ENCODE measurements at regions of chr16 and their contacts with region 1.

Region 1: DNA sequence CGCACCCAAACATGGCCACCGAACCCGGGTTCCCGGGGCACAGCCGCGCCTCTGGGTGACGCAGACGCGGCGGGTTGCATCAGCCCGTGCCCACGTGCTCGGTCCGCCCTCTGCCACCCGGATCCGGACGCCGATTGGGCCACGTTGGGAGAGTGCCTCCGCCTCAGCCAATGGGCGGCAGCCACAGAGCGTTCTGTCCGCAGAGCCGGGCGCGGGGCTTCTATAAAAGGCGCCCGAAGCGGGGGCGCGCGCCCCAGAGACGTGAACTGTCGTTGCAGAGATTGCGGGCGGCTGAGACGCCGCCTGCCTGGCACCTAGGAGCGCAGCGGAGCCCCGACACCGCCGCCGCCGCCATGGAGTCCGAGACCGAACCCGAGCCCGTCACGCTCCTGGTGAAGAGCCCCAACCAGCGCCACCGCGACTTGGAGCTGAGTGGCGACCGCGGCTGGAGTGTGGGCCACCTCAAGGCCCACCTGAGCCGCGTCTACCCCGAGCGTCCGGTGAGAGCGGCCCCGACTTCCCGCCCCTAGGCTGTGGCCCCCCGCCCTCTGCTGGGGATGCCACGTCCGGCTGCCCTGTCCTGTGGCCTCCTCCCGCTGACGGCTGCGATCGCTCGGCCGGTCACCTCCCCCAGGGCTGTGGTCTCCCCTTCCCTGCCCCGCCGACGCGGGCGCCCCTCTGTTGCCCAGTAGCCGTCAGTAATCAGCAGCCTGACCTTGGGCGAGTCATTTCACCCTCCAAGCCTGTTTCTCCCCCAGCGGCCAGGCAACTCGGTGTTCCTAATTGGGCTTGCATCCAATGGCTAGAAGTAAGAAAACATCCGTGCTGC is at the start of gene HERPUD1:
- DNase-seq: peak; percentile 89
- ATAC-seq: peak; percentile 84
- H3K4me3 ChIP-seq: peak within 1 kb of the TSS; percentile 92
- H3K27ac ChIP-seq: peak within 1 kb of the TSS; percentile 88
- H3K4me1 ChIP-seq: peaks cover 20% of the 10 kb centered on the region
- H3K27me3 ChIP-seq: no peaks in the 10 kb centered on the region
- CTCF ChIP-seq: no peak
- EP300 ChIP-seq: no peak
- POLR2A ChIP-seq: peak; percentile 99
- RAD21 ChIP-seq: no peak
- polyA plus RNA-seq, gene HERPUD1: 32.6 to 68.1 TPM

Region 2: DNA sequence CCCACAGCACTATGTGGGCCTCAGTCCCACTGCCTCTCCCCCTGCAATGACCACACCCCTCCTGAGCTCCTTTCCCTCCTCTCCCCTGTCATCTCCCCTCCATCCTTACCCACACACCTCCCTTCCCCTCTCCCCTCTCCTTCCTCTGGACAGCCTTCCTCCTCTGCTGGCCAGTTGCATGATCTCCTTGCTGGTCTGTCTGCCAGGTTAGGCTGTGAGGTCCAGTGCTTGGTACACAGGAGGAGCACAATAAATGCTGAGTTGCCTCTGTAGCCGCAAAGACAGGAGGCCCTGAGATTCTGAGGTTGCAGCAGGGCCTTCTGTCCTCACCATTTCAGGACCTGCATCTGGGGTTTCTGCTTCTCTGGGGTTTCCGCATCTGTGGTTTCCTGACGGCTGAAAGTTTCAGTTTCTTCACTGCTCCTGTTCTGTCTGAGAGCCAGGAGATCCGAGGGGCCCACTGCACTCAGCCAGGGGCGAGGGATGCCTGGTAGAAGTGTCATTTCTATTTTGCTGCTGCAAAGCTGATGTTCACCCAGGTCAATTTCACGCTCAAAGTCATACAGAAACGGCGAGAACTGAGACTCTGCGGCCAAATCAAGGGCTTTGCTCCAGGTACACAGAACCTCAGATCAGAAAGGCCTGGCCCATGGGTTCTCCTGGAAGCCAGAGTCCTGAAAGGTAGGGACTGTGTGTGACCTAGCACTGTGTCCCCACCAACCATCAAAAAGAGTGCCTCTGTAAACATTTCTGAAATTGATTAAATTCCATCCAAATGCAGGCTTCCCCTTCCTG is 71.7 kb before region 1 on chr16:
- CTCF ChIA-PET with region 1: interaction called, 5 read pairs
- POLR2A ChIA-PET with region 1: interaction called, 7 read pairs
- RAD21 ChIA-PET with region 1: interaction called, 3 read pairs
- SMC1A ChIA-PET with region 1: interaction called, 6 read pairs
- in situ Hi-C with region 1: no loop called
- intact Hi-C with region 1: loop called (anchors 1 kb)
- DNase-seq: peak; percentile 75
- ATAC-seq: peak; percentile 93
- H3K4me3 ChIP-seq: 0 out of 2 replicates have a peak overlapping the region, but pooled peaks have one; percentile 13
- H3K27ac ChIP-seq: peak overlapping the region; percentile 52
- H3K4me1 ChIP-seq: peaks cover 33% of the 10 kb centered on the region
- H3K27me3 ChIP-seq: no peaks in the 10 kb centered on the region
- CTCF ChIP-seq: no peak
- EP300 ChIP-seq: no peak
- POLR2A ChIP-seq: no peak
- RAD21 ChIP-seq: no peak; the same call in 1 of the 2 replicates

Region 3: DNA sequence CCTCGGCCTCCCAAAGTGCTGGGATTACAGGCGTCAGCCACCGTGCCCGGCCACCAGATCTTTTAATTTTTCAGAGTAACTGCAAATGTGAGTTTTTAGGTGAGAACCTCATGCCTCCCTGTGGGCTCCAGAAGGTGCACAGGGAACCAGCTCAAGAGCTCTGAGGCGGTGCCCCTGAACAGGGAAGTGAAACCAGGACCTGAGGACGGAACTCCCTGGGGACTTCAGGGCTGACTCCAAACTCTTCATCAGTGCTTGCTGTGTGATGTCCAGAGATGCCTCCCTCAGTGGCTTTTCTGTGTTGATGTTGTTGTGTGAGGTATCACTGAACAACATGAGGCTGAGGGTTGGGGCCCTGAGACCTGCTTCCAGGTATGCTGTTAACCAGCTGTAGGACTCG is 43.3 kb before region 1 on chr16:
- CTCF ChIA-PET with region 1: interaction called, 3 read pairs
- POLR2A ChIA-PET with region 1: interaction called, 8 read pairs
- RAD21 ChIA-PET with region 1: interaction called, 10 read pairs
- SMC1A ChIA-PET with region 1: interaction called, 9 read pairs
- in situ Hi-C with region 1: no loop called
- intact Hi-C with region 1: loop called (anchors 2 kb)
- DNase-seq: peak; percentile 61
- ATAC-seq: peak; percentile 94
- H3K4me3 ChIP-seq: no peak overlapping the region
- H3K27ac ChIP-seq: no peak overlapping the region
- H3K4me1 ChIP-seq: peaks cover 8% of the 10 kb centered on the region
- H3K27me3 ChIP-seq: no peaks in the 10 kb centered on the region
- CTCF ChIP-seq: peak in 2 of 3 experiments; percentile 15 to 27; a peak in 2 of 6 replicates
- EP300 ChIP-seq: peak in 1 of 2 experiments; percentile 57; a peak in 1 of 4 replicates
- POLR2A ChIP-seq: no peak
- RAD21 ChIP-seq: 0 out of 2 replicates have a peak, but pooled peaks have one; percentile 37

Region 4: DNA sequence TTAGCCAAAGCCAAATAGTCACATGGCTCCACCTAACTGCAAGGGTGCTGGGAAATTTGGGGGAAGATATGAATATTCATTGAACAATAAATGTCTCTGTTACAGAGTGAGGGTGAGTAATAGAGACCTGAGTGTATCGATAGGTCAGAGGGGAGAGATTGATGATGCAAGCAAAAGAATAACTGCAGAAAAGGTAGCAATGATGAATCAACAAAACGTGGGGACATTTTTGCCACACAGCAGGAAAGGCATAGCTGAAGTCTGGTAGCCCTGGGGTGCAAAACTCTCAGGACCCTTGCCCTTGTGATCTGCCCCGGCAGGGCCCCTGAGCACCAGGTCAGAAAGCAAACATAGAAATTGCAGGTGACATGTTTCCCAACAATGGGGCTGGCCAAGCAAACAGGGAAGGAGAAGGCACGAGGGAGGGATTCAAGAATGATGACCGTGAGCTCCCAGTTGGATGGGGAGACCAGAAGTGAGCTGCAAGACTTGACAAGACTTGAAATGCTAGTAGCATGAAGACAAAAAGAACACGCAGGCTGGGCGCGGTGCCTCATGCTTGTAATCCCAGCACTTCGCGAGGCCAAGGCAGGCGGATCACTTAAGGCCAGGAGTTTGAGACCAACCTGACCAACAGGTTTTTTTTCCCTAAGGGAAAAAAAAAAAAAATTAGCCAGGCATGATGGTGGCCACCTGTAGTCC is 12.9 kb before region 1 on chr16:
- CTCF ChIA-PET with region 1: interaction called, 14 read pairs
- POLR2A ChIA-PET with region 1: interaction called, 306 read pairs
- RAD21 ChIA-PET with region 1: interaction called, 34 read pairs
- SMC1A ChIA-PET with region 1: interaction called, 52 read pairs
- in situ Hi-C with region 1: no loop called
- intact Hi-C with region 1: loop called (anchors 1 kb)
- DNase-seq: no peak
- ATAC-seq: no peak
- H3K4me3 ChIP-seq: no peak overlapping the region
- H3K27ac ChIP-seq: no peak overlapping the region
- H3K4me1 ChIP-seq: peaks cover 31% of the 10 kb centered on the region
- H3K27me3 ChIP-seq: no peaks in the 10 kb centered on the region
- CTCF ChIP-seq: no peak
- EP300 ChIP-seq: no peak
- POLR2A ChIP-seq: no peak
- RAD21 ChIP-seq: no peak

Region 5: DNA sequence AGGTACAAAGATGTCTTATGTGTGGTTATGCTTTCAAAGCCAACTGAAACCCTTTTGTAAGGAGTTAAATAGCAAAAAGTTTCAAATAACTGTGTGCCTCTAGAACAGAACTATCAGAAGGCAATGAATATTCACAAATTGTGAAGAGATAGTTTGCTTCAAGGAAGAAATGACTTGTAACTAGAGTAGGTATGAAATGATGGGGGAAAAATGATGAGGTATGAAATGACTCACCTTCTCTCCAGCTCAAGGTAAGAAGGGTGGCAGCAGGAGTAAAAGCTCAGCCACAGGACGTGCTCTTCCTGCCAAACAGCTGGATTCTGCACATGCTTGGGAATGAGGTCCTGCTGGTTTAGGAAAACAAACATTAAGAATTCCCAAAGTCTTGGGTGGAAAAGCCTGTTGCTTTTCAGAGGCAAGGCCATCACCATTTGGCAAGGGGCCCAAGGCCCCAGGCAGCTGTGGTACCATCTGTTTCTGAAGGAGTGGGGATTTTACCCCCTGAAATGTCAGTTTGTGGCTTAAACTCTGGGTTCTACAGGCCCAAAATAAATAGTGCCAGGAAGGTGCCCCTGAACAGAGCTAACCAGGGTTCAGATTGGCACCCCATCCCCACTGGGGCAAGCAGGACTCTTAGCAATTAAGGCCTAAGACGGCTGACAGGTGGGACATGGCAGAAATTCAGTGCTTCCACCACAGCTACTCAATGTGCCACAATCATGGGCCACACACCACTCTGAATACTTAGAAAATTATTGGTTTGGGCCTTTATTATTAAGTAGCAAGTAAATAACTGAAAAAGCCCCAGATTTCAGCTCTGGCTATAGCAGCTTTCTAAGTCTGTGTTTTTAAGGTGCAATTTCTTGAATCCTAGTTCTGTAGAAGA is 13.1 kb after region 1 on chr16:
- CTCF ChIA-PET with region 1: interaction called, 4 read pairs
- POLR2A ChIA-PET with region 1: interaction called, 49 read pairs
- RAD21 ChIA-PET with region 1: interaction called, 12 read pairs
- SMC1A ChIA-PET with region 1: interaction called, 18 read pairs
- in situ Hi-C with region 1: no loop called
- intact Hi-C with region 1: no loop called
- DNase-seq: peak; percentile 61
- ATAC-seq: peak; percentile 34
- H3K4me3 ChIP-seq: no peak overlapping the region
- H3K27ac ChIP-seq: peak overlapping the region; percentile 40; the same call in 1 of the 2 replicates
- H3K4me1 ChIP-seq: peaks cover 47% of the 10 kb centered on the region
- H3K27me3 ChIP-seq: no peaks in the 10 kb centered on the region
- CTCF ChIP-seq: no peak
- EP300 ChIP-seq: peak in 1 of 2 experiments; percentile 55; a peak in 1 of 4 replicates
- POLR2A ChIP-seq: peak; percentile 76
- RAD21 ChIP-seq: no peak

Region 6: DNA sequence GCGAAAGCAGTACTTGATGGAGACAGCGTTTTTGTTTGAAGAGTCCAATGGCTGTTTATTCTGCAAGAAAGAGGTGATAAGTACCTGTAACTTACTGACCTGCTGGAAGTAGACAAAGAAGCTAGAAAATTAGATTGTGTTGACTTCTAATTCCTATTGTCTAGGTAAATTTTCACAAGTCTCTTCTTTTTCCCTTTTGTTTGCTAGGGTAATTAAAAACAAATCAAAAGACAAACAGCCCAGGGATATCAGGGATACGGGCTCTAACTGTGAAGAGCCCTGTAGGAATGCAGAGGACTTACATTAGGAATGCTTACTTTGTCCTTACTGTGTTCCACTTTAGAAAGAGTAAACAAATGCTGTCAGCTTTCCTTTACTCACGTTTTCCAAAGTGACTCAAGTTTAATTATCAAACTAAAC is 246.7 kb after region 1 on chr16:
- CTCF ChIA-PET with region 1: no interaction called
- POLR2A ChIA-PET with region 1: no interaction called
- RAD21 ChIA-PET with region 1: no interaction called
- SMC1A ChIA-PET with region 1: no interaction called
- in situ Hi-C with region 1: no loop called
- intact Hi-C with region 1: no loop called
- DNase-seq: no peak
- ATAC-seq: no peak
- H3K4me3 ChIP-seq: no peak overlapping the region
- H3K27ac ChIP-seq: no peak overlapping the region
- H3K4me1 ChIP-seq: peaks cover 5% of the 10 kb centered on the region; the same call in 1 of the 2 replicates
- H3K27me3 ChIP-seq: no peaks in the 10 kb centered on the region
- CTCF ChIP-seq: no peak
- EP300 ChIP-seq: no peak
- POLR2A ChIP-seq: no peak
- RAD21 ChIP-seq: no peak